Posterior vena cava (tissue), 2 donors: ENCODE measurements at regions of chr3 and their contacts with region 1.

Region 1: DNA sequence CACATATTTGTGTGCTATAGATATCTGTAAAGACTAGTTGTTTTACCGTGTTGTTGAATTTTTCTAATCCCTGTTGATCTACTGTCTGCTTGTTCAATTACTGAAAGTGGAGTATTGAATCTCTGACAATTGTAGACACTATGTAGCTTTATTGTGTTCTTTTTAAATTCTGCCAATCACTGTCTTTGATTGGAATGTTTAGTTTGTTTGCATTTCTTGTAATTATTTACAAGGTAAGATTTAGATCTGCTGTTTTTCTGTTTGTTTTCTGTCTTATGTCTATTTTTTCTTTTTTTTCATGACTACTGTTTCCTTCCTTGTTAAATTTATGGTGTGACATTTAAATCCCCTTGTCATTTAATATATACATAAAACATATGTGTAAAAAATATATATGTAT is 702.4 kb upstream of the EPHA6 start:
- DNase-seq: no peak

Region 2: DNA sequence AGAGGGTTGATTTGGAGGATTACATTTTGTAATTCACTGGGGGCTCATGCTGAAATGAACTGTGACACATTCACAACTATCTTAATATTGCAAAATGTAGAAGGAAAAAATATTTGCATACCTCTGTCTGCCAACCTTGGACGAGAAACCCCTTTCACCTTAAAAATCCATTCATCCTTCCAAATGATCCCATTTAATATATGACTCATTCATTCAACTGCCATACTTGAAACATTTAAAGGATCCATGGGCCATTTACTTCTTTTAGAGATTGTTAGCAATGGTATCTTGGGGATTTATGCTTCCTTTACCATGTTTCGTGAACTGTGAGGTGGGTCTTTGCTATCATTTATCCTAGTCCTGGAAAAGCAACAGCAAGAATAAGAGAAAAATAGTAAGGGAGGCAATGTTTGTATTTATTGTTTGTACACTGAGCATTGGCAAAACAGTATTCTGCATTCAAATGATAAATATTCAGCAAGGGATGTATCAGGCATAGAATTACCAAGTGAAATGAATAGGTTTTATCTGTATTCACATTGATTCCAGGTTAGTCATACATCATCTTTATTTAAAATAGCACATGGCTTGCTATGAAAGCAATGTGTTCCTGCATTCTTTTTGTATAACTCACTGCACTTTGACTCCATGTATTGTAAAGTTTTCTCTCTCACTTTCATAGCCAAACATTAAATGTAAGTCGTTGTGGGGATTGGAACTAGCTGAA is 1671.0 kb before region 1 on chr3:
- intact Hi-C with region 1: loop called in 1 of 2 experiments (anchors 5 kb)
- DNase-seq: no peak

Region 3: DNA sequence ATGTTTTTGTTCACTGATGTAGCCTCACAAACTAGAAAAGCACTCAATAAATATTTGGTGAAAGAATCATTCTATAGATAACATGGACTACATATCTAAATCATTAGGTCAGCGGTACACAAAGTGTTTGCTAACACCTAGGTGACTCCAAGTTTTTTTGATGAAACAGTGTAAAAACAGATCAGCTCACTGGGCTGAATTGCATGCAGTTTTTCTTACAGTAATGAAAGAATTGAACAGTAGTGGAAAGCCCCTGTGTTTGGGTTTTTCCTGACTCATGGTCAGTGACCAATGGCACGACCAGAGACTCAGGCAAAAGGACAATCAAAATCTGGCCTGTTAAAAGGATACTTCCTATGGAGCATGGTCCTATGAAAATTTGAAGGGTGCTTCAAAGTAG is 318.1 kb after region 1 on chr3:
- intact Hi-C with region 1: no loop called
- DNase-seq: no peak